Tibial artery (tissue), 4 donors: ENCODE measurements at regions of chr10 and their contacts with region 1.

Region 1: GRCh38 chr10:115762029-115762428 is 511.0 kb downstream of the GFRA1 start:
- DNase-seq: no peak
- H3K4me3 ChIP-seq: no peak overlapping the region
- H3K27ac ChIP-seq: peak overlapping the region in 1 of 2 donors; percentile 26
- H3K4me1 ChIP-seq: peaks cover 0 to 9% (median 1%) of the 10 kb centered on the region in 4 donors
- H3K27me3 ChIP-seq: no peaks in the 10 kb centered on the region
- CTCF ChIP-seq: no peak

Region 2: GRCh38 chr10:114876602-114877300 is 885.3 kb before region 1 on chr10:
- intact Hi-C with region 1: loop called (anchors 10 kb)
- DNase-seq: peak; percentile 33 to 73
- H3K4me3 ChIP-seq: no peak overlapping the region
- H3K27ac ChIP-seq: no peak overlapping the region
- H3K4me1 ChIP-seq: peaks cover 0 to 7% (median 2%) of the 10 kb centered on the region in 4 donors
- H3K27me3 ChIP-seq: peaks cover 0 to 3% of the 10 kb centered on the region in 2 donors
- CTCF ChIP-seq: peak; percentile 34 to 48